Ascending aorta (tissue), 2 donors: ENCODE measurements at regions of chr21 and their contacts with region 1.

Region 1: GRCh38 chr21:43728467-43729390 is 9.8 kb downstream of the PDXK start:
- DNase-seq: peak; percentile 89 to 98
- H3K4me3 ChIP-seq: peak overlapping the region; percentile 57 to 70
- H3K27ac ChIP-seq: peak overlapping the region; percentile 90 to 91
- H3K4me1 ChIP-seq: peaks cover 27 to 57% of the 10 kb centered on the region in 2 donors
- H3K27me3 ChIP-seq: no peaks in the 10 kb centered on the region
- CTCF ChIP-seq: peak in 2 of 3 experiments; percentile 32 to 48

Region 2: DNA sequence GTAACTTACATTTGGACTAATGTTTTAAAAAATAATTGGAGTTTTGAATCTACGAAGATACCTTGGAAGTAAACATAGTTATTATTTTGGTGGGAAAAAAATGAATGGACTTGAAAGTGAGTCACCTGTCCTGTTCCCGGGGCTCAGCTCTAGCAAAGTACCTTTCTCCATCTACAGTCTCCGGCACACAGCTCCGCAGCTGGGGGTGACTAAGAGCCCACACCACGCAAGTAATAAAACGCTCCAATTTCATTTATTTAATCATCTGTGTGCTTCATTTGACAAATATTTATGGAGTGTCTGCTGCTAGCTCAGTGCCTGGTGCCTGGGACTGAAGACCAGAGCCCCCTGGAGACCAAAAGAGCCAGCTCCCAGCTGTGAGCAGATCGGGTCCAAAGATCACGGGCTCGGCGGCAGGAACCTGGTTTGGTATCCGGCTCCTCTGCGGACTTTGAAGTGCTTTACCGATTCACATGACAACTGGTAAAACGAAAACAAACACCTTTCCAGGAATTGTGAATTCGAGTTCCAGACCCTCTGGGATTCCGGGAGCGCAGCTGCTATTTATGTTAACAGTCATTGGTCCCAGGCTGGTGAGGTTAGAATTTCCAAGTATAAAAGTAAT is 1960.2 kb before region 1 on chr21:
- intact Hi-C with region 1: loop called (anchors 10 kb)
- DNase-seq: peak in 1 of 2 donors; percentile 74
- H3K4me3 ChIP-seq: peak overlapping the region; percentile 58 to 60
- H3K27ac ChIP-seq: peak overlapping the region; percentile 74 to 83
- H3K4me1 ChIP-seq: peaks cover 0 to 11% of the 10 kb centered on the region in 2 donors
- H3K27me3 ChIP-seq: no peaks in the 10 kb centered on the region
- CTCF ChIP-seq: peak in 2 of 3 experiments; percentile 15 to 28

Region 3: GRCh38 chr21:43703035-43703880 is 25.5 kb before region 1 on chr21:
- intact Hi-C with region 1: loop called (anchors 1 kb)
- DNase-seq: peak in 1 of 2 donors; percentile 83
- H3K4me3 ChIP-seq: peak overlapping the region; percentile 27 to 52
- H3K27ac ChIP-seq: peak overlapping the region; percentile 77 to 82
- H3K4me1 ChIP-seq: peaks cover 20 to 21% of the 10 kb centered on the region in 2 donors
- H3K27me3 ChIP-seq: no peaks in the 10 kb centered on the region
- CTCF ChIP-seq: no peak

Region 4: GRCh38 chr21:43758111-43758641 is 29.4 kb after region 1 on chr21:
- intact Hi-C with region 1: loop called (anchors 1 kb)
- DNase-seq: peak in 1 of 2 donors; percentile 78
- H3K4me3 ChIP-seq: peak overlapping the region; percentile 11 to 56
- H3K27ac ChIP-seq: peak overlapping the region; percentile 71 to 81
- H3K4me1 ChIP-seq: peaks cover 9 to 15% of the 10 kb centered on the region in 2 donors
- H3K27me3 ChIP-seq: no peaks in the 10 kb centered on the region
- CTCF ChIP-seq: no peak

Region 5: DNA sequence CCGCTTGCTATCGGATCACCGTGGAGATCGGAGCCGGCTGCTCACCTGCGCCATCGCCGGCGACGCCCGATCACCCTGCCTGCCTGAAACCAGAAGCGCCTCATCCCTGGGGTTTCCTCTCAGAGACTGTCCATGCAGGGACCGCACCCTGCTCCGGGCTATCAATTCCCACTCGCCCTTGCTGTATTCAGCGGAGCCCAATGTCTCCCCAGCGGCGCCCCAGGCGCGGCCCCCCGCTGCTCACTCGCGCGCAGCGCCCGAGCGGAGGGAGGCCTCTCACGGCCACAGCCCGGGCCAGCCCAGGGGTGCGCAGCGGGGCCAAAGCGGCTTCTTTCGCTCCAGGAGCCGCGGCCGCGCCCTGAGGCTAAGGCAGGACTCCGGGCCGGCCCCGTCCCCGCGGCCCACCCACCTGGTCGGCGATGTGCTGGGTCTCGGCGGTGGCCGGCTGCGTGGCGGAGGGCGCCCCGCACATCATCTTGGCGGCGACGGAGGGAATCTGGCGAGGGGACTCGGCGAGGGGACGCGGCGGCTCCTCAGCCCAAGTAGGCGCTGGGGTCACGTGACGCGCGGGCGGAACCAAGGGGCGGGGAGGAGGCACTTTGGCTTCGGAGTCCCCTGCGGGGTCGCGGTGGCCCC is 47.2 kb after region 1 on chr21 and contains the start of gene CSTB:
- intact Hi-C with region 1: loop called (anchors 5 kb)
- DNase-seq: peak; percentile 47 to 86
- H3K4me3 ChIP-seq: peak within 1 kb of the TSS; percentile 79
- H3K27ac ChIP-seq: peak within 1 kb of the TSS; percentile 88 to 93
- H3K4me1 ChIP-seq: peaks cover 0 to 12% of the 10 kb centered on the region in 2 donors
- H3K27me3 ChIP-seq: no peaks in the 10 kb centered on the region
- CTCF ChIP-seq: no peak
- total RNA-seq, gene CSTB: 8.7 TPM

Region 6: GRCh38 chr21:43866260-43866629 is 137.5 kb after region 1 on chr21:
- intact Hi-C with region 1: loop called (anchors 10 kb)
- DNase-seq: no peak
- H3K4me3 ChIP-seq: peak overlapping the region; percentile 85 to 100
- H3K27ac ChIP-seq: peak overlapping the region; percentile 83 to 87
- H3K4me1 ChIP-seq: peaks cover 0 to 15% of the 10 kb centered on the region in 2 donors
- H3K27me3 ChIP-seq: no peaks in the 10 kb centered on the region
- CTCF ChIP-seq: no peak